ENCODE measurements at regions of chr11 and their contacts with region 1.

Region 1: GRCh38 chr11:3854977-3855807 is at the start of gene STIM1:
- DNase-seq: peak; percentile 95 to 98 (median 97)
- H3K4me3 ChIP-seq: peak within 1 kb of the TSS; percentile 84
- H3K4me3 Mint-ChIP-seq: peak within 1 kb of the TSS; percentile 91 to 99 (median 93)
- H3K27ac ChIP-seq: peak within 1 kb of the TSS; percentile 86
- H3K27ac Mint-ChIP-seq: peak within 1 kb of the TSS; percentile 98 to 100 (median 99)
- H3K4me1 ChIP-seq: peaks cover 58% of the 10 kb centered on the region
- H3K4me1 Mint-ChIP-seq: peaks cover 63 to 68% (median 66%) of the 10 kb centered on the region in 3 donors
- H3K27me3 ChIP-seq: no peaks in the 10 kb centered on the region
- H3K27me3 Mint-ChIP-seq: peaks cover 0 to 3% of the 10 kb centered on the region in 2 donors
- total RNA-seq, gene STIM1: 45.6 to 46.0 TPM

Region 2: DNA sequence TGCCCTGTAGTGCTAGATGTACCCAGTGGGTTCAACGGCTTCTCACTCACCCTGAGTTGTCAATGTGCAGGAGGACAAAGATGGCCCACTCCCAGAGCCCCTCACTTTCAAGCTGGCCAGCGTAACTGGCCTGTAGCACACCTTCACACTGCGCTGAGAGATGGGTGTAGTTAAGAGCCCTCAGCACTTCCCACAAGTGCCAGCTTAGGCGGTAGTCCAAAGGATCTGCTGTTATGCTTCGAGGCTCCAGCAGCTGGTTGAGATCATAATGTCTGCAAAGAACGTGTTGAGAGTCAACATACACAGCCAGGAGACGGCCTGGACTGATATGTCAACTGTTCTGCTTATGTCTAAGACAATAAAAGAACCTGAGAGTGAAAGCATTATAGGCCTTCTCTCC is 169.3 kb before region 1 on chr11:
- CTCF ChIA-PET with region 1: no interaction called
- POLR2A ChIA-PET with region 1: no interaction called
- DNase-seq: no peak
- H3K4me3 ChIP-seq: no peak overlapping the region
- H3K4me3 Mint-ChIP-seq: no peak overlapping the region
- H3K27ac ChIP-seq: no peak overlapping the region
- H3K27ac Mint-ChIP-seq: peak overlapping the region in 1 of 8 donors; percentile 9
- H3K4me1 ChIP-seq: no peaks in the 10 kb centered on the region
- H3K4me1 Mint-ChIP-seq: peaks cover 0 to 7% (median 1%) of the 10 kb centered on the region in 3 donors
- H3K27me3 ChIP-seq: no peaks in the 10 kb centered on the region
- H3K27me3 Mint-ChIP-seq: no peaks in the 10 kb centered on the region

Region 3: DNA sequence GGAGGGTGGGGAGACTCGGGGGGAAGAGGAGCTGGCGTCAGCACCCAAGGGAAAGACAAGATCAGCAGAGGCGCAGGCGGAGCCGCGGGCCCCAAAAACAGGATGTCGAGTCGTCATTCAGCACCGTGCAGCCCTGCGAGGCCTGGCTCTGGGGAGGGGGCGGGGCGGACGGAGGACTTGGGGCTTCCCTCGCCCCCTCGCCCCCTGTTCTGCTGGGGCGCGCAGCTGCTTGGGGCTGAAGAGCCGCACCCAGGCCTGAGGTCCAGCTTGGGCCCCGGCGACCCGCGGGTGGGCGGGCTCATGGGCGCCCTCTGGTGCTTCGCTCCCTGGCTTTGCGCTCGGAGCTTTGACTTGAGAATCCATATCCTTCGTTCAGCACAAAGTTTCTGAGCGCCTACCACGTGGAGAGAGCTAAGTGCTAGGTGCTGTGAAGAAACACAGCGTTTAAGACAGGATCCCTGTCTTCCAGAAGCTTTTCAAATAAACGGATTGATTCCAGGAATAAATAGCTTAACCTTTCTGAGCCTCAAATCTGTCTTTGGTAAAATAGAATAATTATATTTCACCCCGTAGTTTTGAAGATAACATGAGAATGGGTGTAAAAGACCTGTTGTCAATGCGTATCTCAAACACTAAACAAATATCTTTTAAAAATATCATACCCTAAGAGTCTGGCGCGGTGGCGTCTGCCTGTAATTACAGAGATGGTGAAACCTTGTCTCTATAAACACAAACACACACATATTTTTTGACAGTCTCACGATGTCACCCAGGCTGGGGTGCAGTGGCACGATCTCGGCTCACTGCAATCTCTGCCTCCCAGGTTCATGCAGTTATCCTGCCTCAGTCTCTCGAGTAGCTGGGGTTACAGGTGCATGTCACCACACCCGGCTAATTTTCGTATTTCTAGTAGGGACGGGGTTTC is 13.5 kb before region 1 on chr11:
- CTCF ChIA-PET with region 1: interaction called, 297 read pairs
- POLR2A ChIA-PET with region 1: interaction called, 157 read pairs
- DNase-seq: peak; percentile 89 to 97 (median 96)
- H3K4me3 ChIP-seq: peak overlapping the region; percentile 60
- H3K4me3 Mint-ChIP-seq: peak overlapping the region; percentile 85 to 96 (median 91)
- H3K27ac ChIP-seq: peak overlapping the region; percentile 86
- H3K27ac Mint-ChIP-seq: peak overlapping the region; percentile 94 to 99 (median 96)
- H3K4me1 ChIP-seq: peaks cover 32% of the 10 kb centered on the region
- H3K4me1 Mint-ChIP-seq: peaks cover 37 to 48% (median 43%) of the 10 kb centered on the region in 3 donors
- H3K27me3 ChIP-seq: no peaks in the 10 kb centered on the region
- H3K27me3 Mint-ChIP-seq: peaks cover 0 to 4% of the 10 kb centered on the region in 2 donors

Region 4: GRCh38 chr11:3894128-3894731 is 39.0 kb after region 1 on chr11:
- CTCF ChIA-PET with region 1: interaction called, 22 read pairs
- POLR2A ChIA-PET with region 1: interaction called, 4 read pairs
- DNase-seq: peak in 1 of 5 donors; percentile 23
- H3K4me3 ChIP-seq: no peak overlapping the region
- H3K4me3 Mint-ChIP-seq: peak overlapping the region in 4 of 7 donors; percentile 2 to 35 (median 22)
- H3K27ac ChIP-seq: peak overlapping the region; percentile 38
- H3K27ac Mint-ChIP-seq: peak overlapping the region in 7 of 8 donors; percentile 45 to 84 (median 70)
- H3K4me1 ChIP-seq: peaks cover 22% of the 10 kb centered on the region
- H3K4me1 Mint-ChIP-seq: peaks cover 54 to 74% (median 70%) of the 10 kb centered on the region in 3 donors
- H3K27me3 ChIP-seq: no peaks in the 10 kb centered on the region
- H3K27me3 Mint-ChIP-seq: no peaks in the 10 kb centered on the region

Region 5: DNA sequence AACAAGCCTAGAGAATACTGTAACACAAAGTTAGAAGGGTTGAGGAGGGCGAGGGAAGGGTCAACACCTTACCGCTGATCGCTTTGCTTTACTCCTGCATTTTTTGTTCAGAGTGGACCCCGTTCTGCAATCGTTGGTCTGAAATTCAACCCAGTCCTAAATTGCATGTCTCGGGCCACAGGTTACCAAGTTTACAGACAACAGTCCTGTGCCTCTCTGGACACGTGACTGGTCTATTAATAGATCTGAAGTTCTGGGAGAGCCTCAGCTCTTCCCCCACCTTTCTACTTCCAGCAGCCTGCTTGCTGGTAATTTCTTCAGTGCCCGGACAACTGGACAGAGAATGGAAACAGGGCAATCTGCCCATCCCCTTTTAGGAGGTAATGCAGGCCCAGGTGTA is 74.5 kb after region 1 on chr11:
- CTCF ChIA-PET with region 1: interaction called, 16 read pairs
- POLR2A ChIA-PET with region 1: interaction called, 3 read pairs
- DNase-seq: no peak
- H3K4me3 ChIP-seq: no peak overlapping the region
- H3K4me3 Mint-ChIP-seq: no peak overlapping the region
- H3K27ac ChIP-seq: no peak overlapping the region
- H3K27ac Mint-ChIP-seq: peak overlapping the region in 2 of 8 donors; percentile 21 to 29
- H3K4me1 ChIP-seq: peaks cover 27% of the 10 kb centered on the region
- H3K4me1 Mint-ChIP-seq: peaks cover 43 to 81% (median 64%) of the 10 kb centered on the region in 3 donors
- H3K27me3 ChIP-seq: no peaks in the 10 kb centered on the region
- H3K27me3 Mint-ChIP-seq: no peaks in the 10 kb centered on the region

Region 6: GRCh38 chr11:3984896-3985295 is 129.7 kb after region 1 on chr11:
- CTCF ChIA-PET with region 1: interaction called, 38 read pairs
- POLR2A ChIA-PET with region 1: interaction called, 3 read pairs
- DNase-seq: peak in 1 of 5 donors; percentile 50
- H3K4me3 ChIP-seq: no peak overlapping the region
- H3K4me3 Mint-ChIP-seq: peak overlapping the region in 1 of 7 donors; percentile 7
- H3K27ac ChIP-seq: no peak overlapping the region
- H3K27ac Mint-ChIP-seq: peak overlapping the region in 5 of 8 donors; percentile 3 to 86 (median 64)
- H3K4me1 ChIP-seq: peaks cover 64% of the 10 kb centered on the region
- H3K4me1 Mint-ChIP-seq: peaks cover 71 to 97% (median 95%) of the 10 kb centered on the region in 3 donors
- H3K27me3 ChIP-seq: no peaks in the 10 kb centered on the region
- H3K27me3 Mint-ChIP-seq: no peaks in the 10 kb centered on the region

Region 7: DNA sequence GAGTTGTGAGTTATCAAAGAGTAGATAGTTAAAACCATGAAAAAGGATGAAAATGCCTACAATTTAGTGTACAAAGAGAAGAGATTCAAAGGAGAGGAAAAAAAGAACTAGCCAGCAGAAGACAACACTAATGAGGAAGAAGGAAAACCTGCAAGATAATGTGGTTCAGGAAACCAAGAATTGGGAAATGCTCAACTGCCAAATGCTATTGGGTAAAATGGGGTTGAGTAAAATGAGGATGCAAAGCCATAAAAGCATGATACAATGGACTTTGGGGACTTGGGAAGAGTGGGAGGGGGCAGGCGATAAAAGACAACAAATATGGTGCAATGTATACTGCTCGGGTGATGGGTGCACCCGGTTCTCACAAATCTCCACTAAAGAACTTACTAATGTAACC is 586.3 kb after region 1 on chr11:
- CTCF ChIA-PET with region 1: no interaction called
- POLR2A ChIA-PET with region 1: no interaction called
- DNase-seq: no peak
- H3K4me3 ChIP-seq: no peak overlapping the region
- H3K4me3 Mint-ChIP-seq: no peak overlapping the region
- H3K27ac ChIP-seq: no peak overlapping the region
- H3K27ac Mint-ChIP-seq: no peak overlapping the region
- H3K4me1 ChIP-seq: no peaks in the 10 kb centered on the region
- H3K4me1 Mint-ChIP-seq: no peaks in the 10 kb centered on the region
- H3K27me3 ChIP-seq: no peaks in the 10 kb centered on the region
- H3K27me3 Mint-ChIP-seq: peaks cover 4 to 25% of the 10 kb centered on the region in 2 donors